ENCODE measurements at regions of chrX and their contacts with region 1.

Region 1: GRCh38 chrX:65595460-65595876 is 60.9 kb upstream of the LAS1L start:
- DNase-seq: peak; percentile 83 to 98 (median 90)
- ATAC-seq: peak; percentile 81
- H3K4me3 ChIP-seq: peak overlapping the region; percentile 14
- H3K4me3 Mint-ChIP-seq: peak overlapping the region; percentile 72
- H3K27ac ChIP-seq: peak overlapping the region; percentile 74 to 83
- H3K27ac Mint-ChIP-seq: peak overlapping the region; percentile 97
- H3K4me1 ChIP-seq: peaks cover 51% of the 10 kb centered on the region
- H3K4me1 Mint-ChIP-seq: peaks cover 45% of the 10 kb centered on the region
- H3K27me3 ChIP-seq: no peaks in the 10 kb centered on the region
- H3K27me3 Mint-ChIP-seq: no peaks in the 10 kb centered on the region
- CTCF ChIP-seq: peak; percentile 83

Region 2: GRCh38 chrX:65667503-65668376 is 72.3 kb after region 1 on chrX and contains the start of gene MSN:
- CTCF ChIA-PET with region 1: interaction called, 3 read pairs
- POLR2A ChIA-PET with region 1: interaction called, 22 read pairs
- intact Hi-C with region 1: loop called (anchors 1 to 2 kb)
- DNase-seq: peak; percentile 49 to 86 (median 66)
- ATAC-seq: peak; percentile 74
- H3K4me3 ChIP-seq: peak within 1 kb of the TSS; percentile 73
- H3K4me3 Mint-ChIP-seq: peak within 1 kb of the TSS; percentile 99
- H3K27ac ChIP-seq: peak within 1 kb of the TSS; percentile 72 to 84
- H3K27ac Mint-ChIP-seq: peak within 1 kb of the TSS; percentile 93
- H3K4me1 ChIP-seq: peaks cover 24% of the 10 kb centered on the region
- H3K4me1 Mint-ChIP-seq: peaks cover 48% of the 10 kb centered on the region
- H3K27me3 ChIP-seq: no peaks in the 10 kb centered on the region
- H3K27me3 Mint-ChIP-seq: no peaks in the 10 kb centered on the region
- CTCF ChIP-seq: no peak
- total RNA-seq, gene MSN: 268 to 273 TPM

Region 3: DNA sequence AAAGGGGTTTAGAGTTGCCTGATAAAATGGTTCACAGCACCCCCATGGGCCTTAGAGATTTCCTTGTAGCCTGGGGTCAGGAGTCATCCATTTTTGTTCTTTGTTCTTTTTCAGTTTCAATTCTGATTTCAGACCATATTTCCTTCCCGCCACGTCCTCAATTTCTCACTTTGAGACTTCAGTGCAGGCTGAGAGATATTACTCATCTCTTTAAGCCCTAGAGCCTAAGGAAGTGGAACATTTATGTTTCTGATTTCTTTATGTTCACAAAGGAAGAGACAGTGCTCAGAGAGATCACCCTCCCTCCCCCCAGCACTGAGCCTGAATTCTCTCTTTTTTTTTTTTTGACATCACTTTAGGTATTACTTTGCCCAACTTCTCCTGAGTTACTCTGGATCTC is 128.2 kb after region 1 on chrX:
- CTCF ChIA-PET with region 1: no interaction called
- POLR2A ChIA-PET with region 1: no interaction called
- intact Hi-C with region 1: loop called in 1 of 2 experiments (anchors 2 kb)
- DNase-seq: peak in 6 of 14 experiments; percentile 12 to 72 (median 56)
- ATAC-seq: peak; percentile 60
- H3K4me3 ChIP-seq: no peak overlapping the region
- H3K4me3 Mint-ChIP-seq: peak overlapping the region; percentile 58
- H3K27ac ChIP-seq: peak overlapping the region; percentile 59 to 64
- H3K27ac Mint-ChIP-seq: peak overlapping the region; percentile 96
- H3K4me1 ChIP-seq: peaks cover 71% of the 10 kb centered on the region
- H3K4me1 Mint-ChIP-seq: peaks cover 88% of the 10 kb centered on the region
- H3K27me3 ChIP-seq: no peaks in the 10 kb centered on the region
- H3K27me3 Mint-ChIP-seq: no peaks in the 10 kb centered on the region
- CTCF ChIP-seq: no peak

Region 4: DNA sequence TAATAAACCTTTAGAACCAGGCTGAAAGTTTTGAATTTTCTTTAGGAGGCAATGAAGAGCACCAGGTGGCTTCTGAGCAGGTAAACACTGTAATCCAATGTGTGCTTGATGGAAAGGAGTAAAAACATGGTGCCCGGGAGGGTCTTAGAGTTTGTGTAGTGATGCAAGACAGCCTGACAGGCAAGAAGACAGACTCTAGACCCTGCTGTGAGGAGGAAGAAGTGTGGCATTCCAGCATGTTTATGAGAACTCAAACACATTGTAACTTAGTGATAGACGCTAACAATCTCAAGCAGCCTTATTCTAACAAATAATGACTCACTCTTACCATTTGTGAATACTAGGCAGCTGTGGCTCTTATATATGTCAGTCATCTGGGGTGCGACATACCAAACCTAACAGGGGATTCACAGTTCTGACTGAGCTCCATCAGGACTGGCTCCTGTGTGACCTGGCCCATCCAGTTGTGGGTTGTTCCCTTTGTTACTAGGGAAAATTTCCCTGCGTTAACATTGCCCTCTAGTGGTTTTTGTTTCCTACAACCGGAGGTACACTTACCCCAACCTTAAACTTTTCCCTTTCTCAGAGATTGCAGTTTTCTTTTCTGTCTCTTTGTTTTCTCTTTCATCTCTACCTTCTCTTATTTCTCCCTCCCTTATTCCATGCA is 390.6 kb after region 1 on chrX:
- CTCF ChIA-PET with region 1: interaction called, 4 read pairs
- POLR2A ChIA-PET with region 1: no interaction called
- intact Hi-C with region 1: loop called (anchors 1 to 2 kb)
- DNase-seq: peak in 12 of 14 experiments; percentile 4 to 81 (median 28)
- ATAC-seq: peak; percentile 90
- H3K4me3 ChIP-seq: no peak overlapping the region
- H3K4me3 Mint-ChIP-seq: no peak overlapping the region
- H3K27ac ChIP-seq: no peak overlapping the region
- H3K27ac Mint-ChIP-seq: peak overlapping the region; percentile 79
- H3K4me1 ChIP-seq: peaks cover 11% of the 10 kb centered on the region
- H3K4me1 Mint-ChIP-seq: peaks cover 25% of the 10 kb centered on the region
- H3K27me3 ChIP-seq: no peaks in the 10 kb centered on the region
- H3K27me3 Mint-ChIP-seq: no peaks in the 10 kb centered on the region
- CTCF ChIP-seq: peak; percentile 52

Region 5: DNA sequence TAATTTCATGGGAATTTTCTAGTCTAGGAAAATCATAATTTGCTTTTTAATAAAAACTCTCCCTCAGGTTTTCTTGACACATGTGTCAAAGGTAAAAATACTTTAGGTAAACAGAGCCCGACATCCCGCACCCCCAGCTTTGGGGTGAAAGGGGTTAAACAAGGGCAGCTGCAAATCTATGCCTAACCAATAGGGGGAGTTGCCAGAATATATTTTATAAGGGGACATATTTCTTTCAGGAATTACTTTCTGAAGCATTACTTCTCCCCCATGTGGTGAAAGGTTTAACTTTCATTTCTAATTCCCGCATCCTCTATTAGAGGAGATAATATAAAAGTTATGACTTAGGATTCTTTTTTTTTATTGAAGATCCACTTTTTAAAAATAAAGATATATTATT is 514.6 kb after region 1 on chrX:
- CTCF ChIA-PET with region 1: no interaction called
- POLR2A ChIA-PET with region 1: no interaction called
- intact Hi-C with region 1: loop called in 1 of 2 experiments (anchors 10 kb)
- DNase-seq: peak in 5 of 14 experiments; percentile 0 to 52 (median 18)
- ATAC-seq: no peak
- H3K4me3 ChIP-seq: no peak overlapping the region
- H3K4me3 Mint-ChIP-seq: no peak overlapping the region
- H3K27ac ChIP-seq: no peak overlapping the region
- H3K27ac Mint-ChIP-seq: no peak overlapping the region
- H3K4me1 ChIP-seq: peaks cover 4% of the 10 kb centered on the region
- H3K4me1 Mint-ChIP-seq: peaks cover 13% of the 10 kb centered on the region
- H3K27me3 ChIP-seq: no peaks in the 10 kb centered on the region
- H3K27me3 Mint-ChIP-seq: no peaks in the 10 kb centered on the region
- CTCF ChIP-seq: peak; percentile 54

Measured in CD4-positive, alpha-beta T cell (primary cell).